GM10248 (cell line): ENCODE measurements at regions of chr12 and their contacts with region 1.

Region 1: GRCh38 chr12:122406701-122407164 is 15.7 kb downstream of the CLIP1 start:
- DNase-seq: no peak
- CTCF ChIP-seq: no peak

Region 2: GRCh38 chr12:122293081-122293480 is 113.7 kb before region 1 on chr12:
- CTCF ChIA-PET with region 1: no interaction called
- POLR2A ChIA-PET with region 1: interaction called, 10 read pairs
- DNase-seq: peak; percentile 33
- CTCF ChIP-seq: no peak

Region 3: GRCh38 chr12:122374707-122375106 is 32.0 kb before region 1 on chr12:
- CTCF ChIA-PET with region 1: no interaction called
- POLR2A ChIA-PET with region 1: no interaction called
- DNase-seq: no peak
- CTCF ChIP-seq: no peak